ENCODE measurements at regions of chr6 and their contacts with region 1.

Region 1: DNA sequence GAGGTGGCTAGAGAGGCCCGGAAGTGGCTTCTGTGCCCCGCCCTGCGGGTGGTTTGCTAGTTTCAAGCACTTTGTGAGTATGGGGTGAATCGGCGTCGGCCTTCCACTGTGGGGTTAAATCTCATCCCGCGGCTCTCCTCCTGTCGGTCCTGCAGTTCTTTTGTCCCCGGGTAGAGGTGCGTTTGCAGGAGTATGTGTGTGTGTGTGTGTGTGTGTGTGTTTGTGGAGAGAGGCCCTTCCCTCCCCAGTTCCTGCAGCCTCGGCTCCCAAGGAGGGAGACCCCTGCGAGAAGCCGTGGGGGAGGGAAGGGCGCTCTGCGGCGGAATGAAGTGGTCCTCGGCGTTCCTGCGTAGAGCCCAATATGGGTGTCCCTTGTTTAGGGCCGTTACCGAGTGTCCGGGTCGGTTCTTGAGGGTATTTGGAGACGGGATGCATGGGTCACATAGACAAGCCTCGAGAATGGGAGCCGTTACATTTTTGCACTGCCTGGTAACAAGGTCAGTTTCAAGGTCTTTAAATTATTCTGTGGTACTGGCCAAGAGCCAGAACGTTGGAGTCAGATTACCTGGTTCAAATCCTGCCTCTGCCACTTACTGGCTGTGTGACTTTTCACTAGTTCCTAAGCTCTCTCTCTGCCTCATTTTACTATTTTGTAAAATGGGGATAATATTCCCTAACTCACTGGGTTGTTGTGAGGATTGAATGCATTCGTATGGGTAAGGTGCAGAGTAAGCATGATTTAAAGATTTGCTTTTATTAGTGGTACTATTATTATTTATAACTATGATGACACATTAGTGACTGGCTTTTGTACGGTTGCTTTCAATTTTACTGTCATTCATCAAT is at the start of gene ZKSCAN3:
- DNase-seq: peak; percentile 80
- ATAC-seq: peak; percentile 88
- H3K4me3 ChIP-seq: peak within 1 kb of the TSS; percentile 86 to 89
- H3K27ac ChIP-seq: peak within 1 kb of the TSS; percentile 82
- H3K4me1 ChIP-seq: peaks cover 31 to 48% of the 10 kb centered on the region in 2 experiments
- H3K27me3 ChIP-seq: no peaks in the 10 kb centered on the region
- CTCF ChIP-seq: no peak
- POLR2A ChIP-seq: peak; percentile 81
- RAD21 ChIP-seq: 0 out of 2 replicates have a peak, but pooled peaks have one; percentile 10
- total RNA-seq, gene ZKSCAN3: 11.2 TPM

Region 2: GRCh38 chr6:28225056-28225834 is 124.9 kb before region 1 on chr6 and contains the start of gene ZSCAN9:
- CTCF ChIA-PET with region 1: no interaction called
- POLR2A ChIA-PET with region 1: no interaction called
- RAD21 ChIA-PET with region 1: no interaction called
- intact Hi-C with region 1: loop called (anchors 5 kb)
- DNase-seq: peak; percentile 87
- ATAC-seq: peak; percentile 93
- H3K4me3 ChIP-seq: peak within 1 kb of the TSS; percentile 82 to 83
- H3K27ac ChIP-seq: peak within 1 kb of the TSS; percentile 43
- H3K4me1 ChIP-seq: peaks cover 10 to 19% of the 10 kb centered on the region in 2 experiments
- H3K27me3 ChIP-seq: no peaks in the 10 kb centered on the region
- CTCF ChIP-seq: no peak
- POLR2A ChIP-seq: no peak
- RAD21 ChIP-seq: no peak
- total RNA-seq, gene ZSCAN9: 10.8 TPM

Region 3: DNA sequence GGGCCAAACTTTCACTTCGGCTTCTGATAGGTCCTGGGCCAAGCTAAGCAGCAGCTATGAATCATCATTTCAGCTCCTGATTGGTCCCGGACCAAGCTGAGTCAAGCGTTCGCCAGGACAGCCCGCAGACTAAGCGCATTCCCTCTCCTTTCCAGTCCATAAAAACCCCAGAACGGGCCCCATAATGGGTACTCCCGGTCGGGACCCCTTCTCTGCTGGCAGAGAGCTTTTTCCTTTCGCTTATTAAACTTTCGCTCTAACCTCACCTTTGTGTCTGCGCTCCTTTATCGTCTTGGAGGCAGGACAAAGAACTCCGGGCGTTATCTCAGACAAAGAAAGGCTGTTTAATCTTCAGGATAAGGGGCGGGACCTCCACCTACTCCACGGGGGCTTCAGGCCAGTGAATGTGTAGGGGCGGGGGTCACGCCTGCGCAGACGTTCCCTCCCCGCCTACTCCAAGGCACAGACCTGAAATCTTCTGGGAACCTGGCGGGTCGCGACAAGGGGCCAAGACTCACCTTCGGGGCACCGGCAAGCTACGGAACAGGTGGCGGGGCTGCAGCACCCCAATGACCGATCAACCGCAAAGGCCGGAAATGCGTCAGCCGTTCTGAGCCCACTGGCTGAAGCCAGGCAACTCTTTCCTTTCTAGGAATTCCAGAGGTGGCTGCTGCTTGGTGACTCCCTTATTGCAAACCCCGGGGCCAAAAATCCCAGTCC is 14.4 kb before region 1 on chr6 and contains the start of gene ZSCAN31:
- CTCF ChIA-PET with region 1: interaction called, 9 read pairs
- POLR2A ChIA-PET with region 1: interaction called, 14 read pairs
- RAD21 ChIA-PET with region 1: no interaction called
- intact Hi-C with region 1: no loop called
- DNase-seq: peak; percentile 97
- ATAC-seq: peak; percentile 95
- H3K4me3 ChIP-seq: peak within 1 kb of the TSS; percentile 72 to 77
- H3K27ac ChIP-seq: peak within 1 kb of the TSS; percentile 77
- H3K4me1 ChIP-seq: peaks cover 13 to 19% of the 10 kb centered on the region in 2 experiments; a peak in 3 of 4 replicates
- H3K27me3 ChIP-seq: no peaks in the 10 kb centered on the region
- CTCF ChIP-seq: no peak
- POLR2A ChIP-seq: peak; percentile 94
- RAD21 ChIP-seq: no peak
- total RNA-seq, gene ZSCAN31: 10.1 TPM